Activated B cell treated with CpG ODN at 0.5 μM for 24 hours (primary cell): ENCODE measurements at regions of chr14 and their contacts with region 1.

Region 1: DNA sequence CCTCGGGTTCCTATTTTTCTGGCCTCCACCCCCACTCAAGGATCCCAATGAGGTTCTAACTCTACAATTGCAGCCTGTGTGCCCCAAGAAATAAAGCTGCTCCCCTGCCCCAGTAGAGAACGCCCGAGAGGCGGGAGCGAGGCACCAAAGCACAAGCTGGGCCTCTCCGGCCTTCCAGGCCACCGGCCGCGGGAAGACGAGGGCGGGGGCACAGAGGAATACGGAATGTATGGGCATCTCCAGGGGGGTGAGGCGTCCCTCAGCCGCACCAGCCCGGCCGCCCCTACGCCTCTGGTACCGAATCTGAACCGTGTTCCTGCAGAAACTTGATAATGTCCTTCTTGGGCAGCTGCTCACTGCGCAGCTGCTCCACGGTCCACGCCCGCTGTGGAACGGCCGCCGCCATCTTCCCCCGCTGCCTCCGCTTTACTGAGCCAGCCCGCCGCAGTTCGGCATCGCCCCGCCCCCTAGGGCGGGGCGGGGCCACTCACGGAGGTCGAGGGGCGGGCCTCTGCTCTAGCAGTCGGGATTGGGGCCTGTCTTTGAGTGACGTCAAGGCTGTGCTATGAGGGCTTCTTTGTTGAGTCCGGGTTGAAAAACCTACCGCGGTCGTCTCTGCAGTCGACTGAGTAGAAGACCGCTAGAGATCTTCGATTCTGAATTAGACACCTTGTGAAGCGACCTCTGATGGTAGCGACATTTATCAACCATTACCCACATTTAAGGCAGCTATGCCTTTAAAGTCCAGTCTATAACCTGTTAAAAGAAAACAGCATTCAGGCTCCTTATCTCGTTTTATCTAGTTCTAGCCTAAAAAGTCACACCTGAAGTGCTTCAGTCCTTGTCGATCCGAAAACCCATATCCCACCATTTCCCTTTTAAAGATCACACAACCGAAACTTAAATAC is at the start of gene FKBP3:
- DNase-seq: peak; percentile 84
- ATAC-seq: peak; percentile 93
- H3K4me3 Mint-ChIP-seq: peak within 1 kb of the TSS; percentile 97
- H3K27ac Mint-ChIP-seq: peak within 1 kb of the TSS; percentile 99
- H3K4me1 Mint-ChIP-seq: peaks cover 43% of the 10 kb centered on the region
- H3K27me3 Mint-ChIP-seq: no peaks in the 10 kb centered on the region
- CTCF ChIP-seq: no peak
- total RNA-seq, gene FKBP3: 54.8 and 58.3 TPM in 2 replicates

Region 2: GRCh38 chr14:44961604-44962333 is 172.5 kb before region 1 on chr14 and contains the starts of genes KLHL28 and TOGARAM1:
- CTCF ChIA-PET with region 1: no interaction called
- POLR2A ChIA-PET with region 1: interaction called, 36 read pairs
- intact Hi-C with region 1: loop called (anchors 1 kb)
- DNase-seq: peak; percentile 86
- ATAC-seq: peak; percentile 91
- H3K4me3 Mint-ChIP-seq: no peak within 1 kb of the TSS
- H3K27ac Mint-ChIP-seq: no peak within 1 kb of the TSS
- H3K4me1 Mint-ChIP-seq: peaks cover 59% of the 10 kb centered on the region
- H3K27me3 Mint-ChIP-seq: no peaks in the 10 kb centered on the region
- CTCF ChIP-seq: no peak
- total RNA-seq, gene KLHL28: 18.1 and 25.3 TPM in 2 replicates
- total RNA-seq, gene TOGARAM1: 12.7 and 16.9 TPM in 2 replicates

Region 3: GRCh38 chr14:45083971-45084722 is 50.2 kb before region 1 on chr14 and contains the start of gene PRPF39:
- CTCF ChIA-PET with region 1: no interaction called
- POLR2A ChIA-PET with region 1: interaction called, 24 read pairs
- intact Hi-C with region 1: loop called (anchors 1 kb)
- DNase-seq: peak; percentile 97
- ATAC-seq: peak; percentile 94
- H3K4me3 Mint-ChIP-seq: peak within 1 kb of the TSS; percentile 96
- H3K27ac Mint-ChIP-seq: peak within 1 kb of the TSS; percentile 92
- H3K4me1 Mint-ChIP-seq: peaks cover 46% of the 10 kb centered on the region
- H3K27me3 Mint-ChIP-seq: no peaks in the 10 kb centered on the region
- CTCF ChIP-seq: no peak
- total RNA-seq, gene PRPF39: 46.0 and 53.4 TPM in 2 replicates

Region 4: GRCh38 chr14:45253068-45253753 is 118.9 kb after region 1 on chr14 and contains the start of gene MIS18BP1:
- CTCF ChIA-PET with region 1: no interaction called
- POLR2A ChIA-PET with region 1: interaction called, 17 read pairs
- intact Hi-C with region 1: loop called (anchors 1 kb)
- DNase-seq: peak; percentile 87
- ATAC-seq: peak; percentile 88
- H3K4me3 Mint-ChIP-seq: peak within 1 kb of the TSS; percentile 94
- H3K27ac Mint-ChIP-seq: peak within 1 kb of the TSS; percentile 95
- H3K4me1 Mint-ChIP-seq: peaks cover 38% of the 10 kb centered on the region
- H3K27me3 Mint-ChIP-seq: no peaks in the 10 kb centered on the region
- CTCF ChIP-seq: no peak
- total RNA-seq, gene MIS18BP1: 38.8 and 47.1 TPM in 2 replicates